Lower leg skin (tissue), 4 donors: ENCODE measurements at regions of chr1 and their contacts with region 1.

Region 1: GRCh38 chr1:38152351-38153065 is 105.9 kb upstream of the POU3F1 start:
- DNase-seq: no peak
- H3K4me3 ChIP-seq: no peak overlapping the region
- CTCF ChIP-seq: no peak
- POLR2A ChIP-seq: no peak

Region 2: DNA sequence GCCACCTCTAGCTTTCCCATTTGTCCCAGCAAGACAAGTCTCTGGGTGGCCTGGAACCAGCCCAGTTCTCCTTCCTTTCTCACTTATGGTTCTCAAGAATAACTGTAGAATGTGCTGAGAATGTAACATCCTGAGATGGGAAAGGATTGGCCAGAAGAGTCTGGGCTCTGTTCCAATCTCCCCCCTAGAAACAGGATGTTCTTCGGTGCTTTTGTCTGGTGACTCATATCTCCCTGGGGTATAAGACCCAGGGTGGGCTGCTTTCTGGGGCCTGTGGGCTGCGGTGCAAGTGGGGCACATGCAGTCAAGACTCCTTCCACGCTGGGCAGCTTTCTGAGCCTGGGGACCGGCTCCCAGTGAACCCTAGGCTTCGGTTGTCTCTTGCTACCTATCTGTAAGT is 145.3 kb after region 1 on chr1:
- intact Hi-C with region 1: no loop called
- DNase-seq: no peak
- H3K4me3 ChIP-seq: no peak overlapping the region
- CTCF ChIP-seq: no peak
- POLR2A ChIP-seq: no peak

Region 3: DNA sequence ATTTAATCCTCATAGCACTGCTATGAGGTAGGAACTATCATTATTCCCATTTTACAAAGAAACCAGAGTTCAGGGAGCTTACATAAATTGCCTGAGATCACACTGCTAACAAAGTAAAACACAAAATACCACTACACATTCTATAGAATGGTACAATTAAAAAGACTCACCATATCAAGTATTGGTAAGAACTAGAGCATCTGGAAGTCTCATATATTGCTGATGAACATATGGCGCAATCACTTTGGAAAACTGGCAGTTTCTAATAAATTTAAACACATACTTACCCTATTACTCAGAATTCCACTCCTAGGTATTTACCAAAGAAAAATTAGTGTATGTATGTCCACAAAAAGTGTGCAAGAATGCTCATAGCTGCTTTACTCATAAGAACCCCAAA is 445.6 kb after region 1 on chr1:
- intact Hi-C with region 1: loop called (anchors 5 kb)
- DNase-seq: no peak
- H3K4me3 ChIP-seq: no peak overlapping the region
- CTCF ChIP-seq: no peak
- POLR2A ChIP-seq: no peak